ENCODE measurements at regions of chr11 and their contacts with region 1.

Region 1: GRCh38 chr11:73625696-73626318 is 20.6 kb upstream of the PLEKHB1 start:
- DNase-seq: peak; percentile 82
- H3K4me3 Mint-ChIP-seq: no peak overlapping the region
- H3K27ac Mint-ChIP-seq: no peak overlapping the region
- H3K4me1 Mint-ChIP-seq: peaks cover 2% of the 10 kb centered on the region
- H3K27me3 Mint-ChIP-seq: peaks cover 16% of the 10 kb centered on the region

Region 2: GRCh38 chr11:73612601-73613140 is 13.1 kb before region 1 on chr11:
- CTCF ChIA-PET with region 1: interaction called, 10 read pairs
- intact Hi-C with region 1: no loop called
- DNase-seq: no peak
- H3K4me3 Mint-ChIP-seq: no peak overlapping the region
- H3K27ac Mint-ChIP-seq: no peak overlapping the region
- H3K4me1 Mint-ChIP-seq: no peaks in the 10 kb centered on the region
- H3K27me3 Mint-ChIP-seq: no peaks in the 10 kb centered on the region

Region 3: GRCh38 chr11:73640592-73640991 is 14.8 kb after region 1 on chr11:
- CTCF ChIA-PET with region 1: interaction called, 21 read pairs
- intact Hi-C with region 1: no loop called
- DNase-seq: no peak
- H3K4me3 Mint-ChIP-seq: no peak overlapping the region
- H3K27ac Mint-ChIP-seq: no peak overlapping the region
- H3K4me1 Mint-ChIP-seq: peaks cover 16% of the 10 kb centered on the region
- H3K27me3 Mint-ChIP-seq: no peaks in the 10 kb centered on the region

Region 4: DNA sequence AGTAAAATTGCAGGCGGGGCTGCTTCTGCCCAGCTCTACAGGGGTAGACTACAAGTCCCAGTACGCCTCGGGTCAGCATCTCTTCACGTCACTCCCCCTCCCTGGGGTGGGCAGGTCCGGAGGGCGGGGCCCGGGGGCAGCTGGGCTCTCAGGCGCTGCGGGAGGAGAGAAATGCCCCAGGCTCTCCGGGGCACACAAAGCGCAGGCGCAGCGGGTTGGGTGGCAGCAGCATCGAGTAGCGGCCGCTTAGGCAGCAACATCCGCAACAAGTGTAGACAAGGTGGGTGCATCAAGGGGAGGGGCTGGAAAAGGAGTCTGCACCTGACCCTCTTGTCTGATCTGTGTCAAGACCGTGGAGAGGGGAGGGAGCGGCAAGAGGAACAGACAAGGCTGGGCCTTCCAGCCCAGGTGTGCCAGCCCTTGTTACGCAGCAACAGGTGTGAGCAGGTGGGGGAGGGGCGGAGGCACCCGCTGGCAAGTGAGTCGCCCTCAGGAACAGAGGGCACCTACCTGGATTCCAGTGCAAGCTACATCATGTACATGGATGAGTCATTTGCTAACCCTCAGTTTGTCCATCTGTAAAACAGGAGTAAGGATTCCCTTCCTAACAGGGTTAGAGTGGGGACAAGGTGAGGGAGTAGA is 21.8 kb after region 1 on chr11:
- CTCF ChIA-PET with region 1: interaction called, 18 read pairs
- intact Hi-C with region 1: no loop called
- DNase-seq: peak; percentile 96
- H3K4me3 Mint-ChIP-seq: peak overlapping the region; percentile 80
- H3K27ac Mint-ChIP-seq: peak overlapping the region; percentile 63
- H3K4me1 Mint-ChIP-seq: peaks cover 18% of the 10 kb centered on the region
- H3K27me3 Mint-ChIP-seq: no peaks in the 10 kb centered on the region

Region 5: DNA sequence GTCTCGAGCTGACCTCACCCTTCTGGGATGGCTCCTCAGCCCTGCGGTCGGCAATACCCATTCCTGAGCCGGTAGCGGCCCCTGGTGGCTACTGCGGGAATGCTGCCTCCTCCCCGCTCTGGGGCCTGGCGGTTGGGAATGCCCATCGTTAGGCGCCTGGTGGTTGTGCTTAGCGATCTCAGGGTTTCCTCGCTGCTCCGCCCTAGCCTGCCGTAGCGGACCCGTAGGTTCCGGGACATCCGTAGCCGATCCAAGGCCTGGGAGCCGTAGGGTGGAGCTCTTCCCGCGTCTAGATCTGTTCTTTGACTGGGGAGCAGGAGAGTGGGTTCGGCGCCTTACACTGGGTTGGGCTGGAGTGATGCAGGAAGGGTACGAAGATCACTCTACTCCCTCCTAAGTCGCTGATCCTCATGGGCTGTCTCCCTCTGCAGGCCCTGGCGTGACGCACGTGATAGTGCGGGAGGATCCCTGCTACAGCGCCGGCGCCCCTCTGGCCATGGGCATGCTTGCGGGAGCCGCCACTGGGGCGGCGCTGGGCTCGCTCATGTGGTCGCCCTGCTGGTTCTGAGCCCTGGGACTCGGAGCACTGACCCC is 35.3 kb after region 1 on chr11:
- CTCF ChIA-PET with region 1: interaction called, 220 read pairs
- intact Hi-C with region 1: loop called (anchors 1 kb)
- DNase-seq: peak; percentile 93
- H3K4me3 Mint-ChIP-seq: peak overlapping the region; percentile 45
- H3K27ac Mint-ChIP-seq: no peak overlapping the region
- H3K4me1 Mint-ChIP-seq: peaks cover 6% of the 10 kb centered on the region
- H3K27me3 Mint-ChIP-seq: no peaks in the 10 kb centered on the region

Region 6: DNA sequence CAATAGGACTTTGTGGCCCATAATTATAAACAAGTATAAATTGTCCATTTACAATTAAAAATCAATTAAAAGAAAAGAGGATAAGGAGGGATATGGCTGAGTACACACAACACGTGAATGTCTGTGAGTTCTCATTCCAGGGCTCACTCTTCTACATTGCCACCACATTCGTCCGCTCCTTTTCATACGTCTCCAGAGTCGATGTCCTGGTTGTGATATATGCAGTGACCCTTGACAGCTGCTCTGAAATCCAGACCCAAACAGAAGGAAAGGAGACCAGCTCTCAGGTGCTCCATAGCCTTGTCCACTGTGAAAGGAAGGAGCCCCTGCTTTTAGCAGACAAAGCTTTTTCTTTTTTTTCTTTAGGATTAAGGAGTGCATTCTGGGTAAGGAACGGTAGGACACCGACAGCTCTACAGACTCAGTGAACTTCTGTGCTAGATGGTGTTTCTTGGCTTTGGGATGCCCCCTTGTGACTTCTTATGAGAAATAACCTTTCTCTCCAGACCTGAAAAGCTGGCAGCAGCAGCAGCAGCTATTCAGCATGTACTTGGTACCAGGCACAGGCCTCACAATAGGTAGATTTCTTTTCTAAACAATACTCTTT is 305.3 kb after region 1 on chr11:
- CTCF ChIA-PET with region 1: interaction called, 7 read pairs
- intact Hi-C with region 1: loop called (anchors 1 kb)
- DNase-seq: peak; percentile 36
- H3K4me3 Mint-ChIP-seq: no peak overlapping the region
- H3K27ac Mint-ChIP-seq: no peak overlapping the region
- H3K4me1 Mint-ChIP-seq: no peaks in the 10 kb centered on the region
- H3K27me3 Mint-ChIP-seq: no peaks in the 10 kb centered on the region